Heart left ventricle (tissue), 16 donors: ENCODE measurements at regions of chr21 and their contacts with region 1.

Region 1: DNA sequence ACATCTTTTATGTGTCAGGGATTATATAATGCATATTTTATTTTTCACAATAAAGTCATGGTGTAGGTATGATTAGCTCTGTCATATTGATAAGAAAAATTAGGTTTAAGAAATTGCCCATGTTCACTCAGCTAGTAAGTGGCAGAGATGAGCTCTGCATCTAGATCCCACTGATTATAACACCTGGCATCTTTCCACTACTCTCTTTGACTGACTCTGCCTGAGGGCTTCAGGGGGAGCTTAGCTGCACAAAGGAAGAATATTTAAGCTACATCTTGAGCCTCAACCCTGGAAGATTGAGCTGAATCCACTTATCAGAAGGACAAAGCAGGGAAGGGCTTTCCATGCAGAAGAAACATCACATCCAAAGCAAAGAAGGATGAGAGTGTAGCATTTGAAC is 190.4 kb downstream of the MIS18A start:
- DNase-seq: no peak
- ATAC-seq: no peak
- H3K4me3 ChIP-seq: no peak overlapping the region
- H3K27ac ChIP-seq: no peak overlapping the region
- H3K4me1 ChIP-seq: no peaks in the 10 kb centered on the region
- H3K27me3 ChIP-seq: no peaks in the 10 kb centered on the region
- CTCF ChIP-seq: no peak
- POLR2A ChIP-seq: no peak

Region 2: GRCh38 chr21:31921079-31921478 is 167.4 kb before region 1 on chr21:
- intact Hi-C with region 1: loop called in 1 of 10 experiments (anchors 5 kb)
- DNase-seq: no peak
- ATAC-seq: no peak
- H3K4me3 ChIP-seq: no peak overlapping the region
- H3K27ac ChIP-seq: no peak overlapping the region
- H3K4me1 ChIP-seq: no peaks in the 10 kb centered on the region
- H3K27me3 ChIP-seq: no peaks in the 10 kb centered on the region
- CTCF ChIP-seq: no peak
- POLR2A ChIP-seq: no peak

Region 3: GRCh38 chr21:32001390-32001789 is 87.1 kb before region 1 on chr21:
- intact Hi-C with region 1: no loop called
- DNase-seq: no peak
- ATAC-seq: no peak
- H3K4me3 ChIP-seq: no peak overlapping the region
- H3K27ac ChIP-seq: no peak overlapping the region
- H3K4me1 ChIP-seq: no peaks in the 10 kb centered on the region
- H3K27me3 ChIP-seq: no peaks in the 10 kb centered on the region
- CTCF ChIP-seq: no peak
- POLR2A ChIP-seq: no peak